ENCODE measurements at regions of chr1 and their contacts with region 1.

Region 1: DNA sequence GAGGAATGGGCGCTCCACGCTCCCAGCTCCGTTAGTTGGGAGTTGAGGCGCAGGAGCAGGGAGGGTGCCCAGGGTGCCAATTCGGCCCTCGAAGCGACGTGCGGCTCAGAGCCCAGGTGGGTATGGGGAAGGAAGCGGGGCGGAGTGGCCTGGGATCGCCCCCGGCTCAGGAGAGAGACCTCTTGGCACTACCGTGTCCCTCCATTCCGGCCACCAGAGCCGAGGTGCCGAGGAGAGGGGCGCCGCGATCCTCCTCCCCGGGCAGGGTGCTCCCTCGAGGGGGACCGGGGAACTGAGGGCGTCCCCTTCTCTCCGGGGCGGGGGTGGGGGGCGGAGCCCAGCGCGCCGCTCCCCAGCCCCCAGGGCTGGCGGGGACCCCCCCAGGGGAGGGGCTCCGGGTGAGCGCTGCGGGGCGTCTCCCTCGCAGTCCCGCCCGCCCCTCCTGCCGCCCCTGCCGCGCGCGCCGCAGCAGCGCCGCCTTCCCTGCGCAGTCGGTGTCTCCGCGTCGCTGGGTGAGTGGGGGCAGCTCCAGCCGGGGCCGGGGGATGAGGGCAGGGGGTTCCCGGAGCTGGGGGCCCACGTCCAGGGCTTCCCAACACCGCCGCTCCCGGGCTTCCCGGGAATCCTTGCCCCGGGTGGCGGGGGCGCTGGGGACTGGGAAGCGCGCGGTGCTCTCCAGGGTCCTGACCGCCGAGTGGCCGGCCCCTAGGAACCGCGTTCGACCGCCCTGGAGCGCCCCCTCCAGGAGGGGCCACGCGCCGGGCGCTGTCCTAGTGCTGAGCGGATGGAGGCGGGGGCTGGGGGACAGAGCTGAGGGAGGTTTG is at the start of gene HPCA:
- DNase-seq: peak; percentile 76
- H3K4me3 ChIP-seq: peak within 1 kb of the TSS in 1 of 2 experiments; percentile 25; a peak in 3 of 4 replicates
- H3K27ac ChIP-seq: no peak within 1 kb of the TSS
- H3K4me1 ChIP-seq: peaks cover 0 to 8% of the 10 kb centered on the region in 2 experiments; a peak in 2 of 4 replicates
- H3K27me3 ChIP-seq: peaks cover 5% of the 10 kb centered on the region; the same call in 1 of the 2 replicates
- CTCF ChIP-seq: peak; percentile 75
- EP300 ChIP-seq: no peak
- RAD21 ChIP-seq: no peak
- polyA plus RNA-seq, gene HPCA: not detected in 2 replicates

Region 2: DNA sequence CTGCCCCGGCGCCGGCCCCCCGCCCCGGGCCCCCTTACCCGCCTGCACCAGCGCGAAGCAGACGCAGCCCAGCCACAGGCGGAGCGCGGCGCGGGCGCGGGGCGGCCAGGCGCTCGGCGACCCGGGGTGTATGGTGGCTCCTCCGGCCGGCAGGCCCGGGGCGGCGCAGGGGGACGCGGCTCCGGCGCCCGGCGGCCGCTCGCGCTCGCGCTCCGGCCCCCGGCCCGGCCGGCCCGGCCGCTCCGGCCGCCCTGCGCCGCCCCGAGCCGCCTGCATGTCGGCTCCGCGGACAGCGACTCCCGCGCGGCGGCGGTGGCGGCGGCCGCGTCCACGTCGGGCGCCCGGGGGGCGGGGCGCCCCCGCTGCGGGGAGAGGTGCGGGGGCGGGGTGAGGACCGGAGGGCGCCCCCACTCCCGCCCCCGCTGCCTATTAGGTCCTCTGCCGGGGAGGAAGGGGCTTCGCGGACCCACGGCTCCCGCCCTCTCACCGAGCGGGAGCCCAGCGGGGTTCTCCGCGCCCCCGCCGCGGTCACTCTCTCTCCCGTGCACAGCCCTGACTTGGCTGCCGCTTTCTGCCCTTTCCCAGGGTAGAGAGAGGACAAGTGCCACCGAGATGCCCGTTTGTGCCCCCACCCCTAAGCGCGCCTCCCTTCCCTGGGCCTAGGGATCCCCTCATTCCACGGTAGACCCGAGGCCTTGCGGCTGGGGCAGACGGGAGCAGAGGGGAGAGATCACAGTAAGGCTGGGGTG is 15.4 kb before region 1 on chr1 and contains the start of gene FNDC5:
- CTCF ChIA-PET with region 1: interaction called, 46 read pairs
- POLR2A ChIA-PET with region 1: no interaction called
- DNase-seq: peak; percentile 89
- H3K4me3 ChIP-seq: peak within 1 kb of the TSS in 1 of 2 experiments; percentile 46; a peak in 3 of 4 replicates
- H3K27ac ChIP-seq: no peak within 1 kb of the TSS
- H3K4me1 ChIP-seq: peaks cover 0 to 13% of the 10 kb centered on the region in 2 experiments; a peak in 1 of 4 replicates
- H3K27me3 ChIP-seq: no peaks in the 10 kb centered on the region
- CTCF ChIP-seq: no peak
- EP300 ChIP-seq: no peak
- RAD21 ChIP-seq: no peak
- polyA plus RNA-seq, gene FNDC5: 0.59 and 0.94 TPM in 2 replicates

Region 3: DNA sequence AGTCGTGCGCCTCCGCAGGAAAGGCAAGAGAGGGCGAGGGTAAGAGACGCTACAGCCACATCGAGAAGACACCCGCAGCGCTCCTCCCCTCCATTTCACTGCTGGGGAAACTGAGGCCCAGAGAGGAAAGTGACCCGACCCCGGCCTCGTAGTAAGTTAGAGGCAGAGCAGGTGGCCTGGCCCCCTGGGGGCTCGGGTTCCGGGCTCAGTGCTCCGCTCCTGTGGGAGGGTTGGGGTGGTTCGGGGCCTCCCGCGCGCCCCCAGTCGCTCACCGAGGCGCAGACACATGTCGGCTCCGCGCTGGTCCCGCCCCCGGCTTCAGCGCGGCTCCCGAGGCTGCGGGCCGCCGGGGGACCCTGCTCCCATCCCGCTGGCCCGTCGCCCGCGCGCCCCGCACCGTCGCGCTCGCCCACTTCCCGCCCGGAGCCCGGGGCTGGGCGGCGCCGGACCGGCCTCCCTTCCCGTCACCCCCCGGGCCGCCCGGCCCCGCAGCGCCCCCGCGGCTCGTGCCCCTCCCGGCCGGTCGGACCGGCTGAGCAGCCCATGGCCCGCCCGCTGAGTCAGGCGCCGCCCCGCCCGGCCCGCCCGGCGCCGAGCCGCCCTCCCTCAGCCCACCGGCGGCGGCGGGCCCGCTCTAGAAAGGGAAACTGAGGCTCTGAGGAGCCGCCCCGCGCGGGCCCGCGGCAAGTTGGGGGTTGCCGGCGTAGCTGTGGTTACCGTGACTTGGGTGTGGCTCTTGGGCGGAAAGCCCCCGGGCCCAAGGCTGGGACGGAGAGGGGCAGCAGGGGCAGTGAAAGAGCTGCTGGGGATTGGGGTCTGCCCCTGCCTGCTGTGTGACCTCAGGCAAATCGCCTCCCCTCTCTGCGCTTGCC is 15.0 kb after region 1 on chr1 and contains the start of gene TMEM54:
- CTCF ChIA-PET with region 1: interaction called, 19 read pairs
- POLR2A ChIA-PET with region 1: no interaction called
- DNase-seq: peak; percentile 83
- H3K4me3 ChIP-seq: peak within 1 kb of the TSS; percentile 58 to 77
- H3K27ac ChIP-seq: no peak within 1 kb of the TSS
- H3K4me1 ChIP-seq: peaks cover 0 to 11% of the 10 kb centered on the region in 2 experiments; a peak in 1 of 4 replicates
- H3K27me3 ChIP-seq: peaks cover 7% of the 10 kb centered on the region; the same call in 1 of the 2 replicates
- CTCF ChIP-seq: peak; percentile 6; the same call in 1 of the 2 replicates
- EP300 ChIP-seq: no peak
- RAD21 ChIP-seq: no peak
- polyA plus RNA-seq, gene TMEM54: 54.5 and 66.6 TPM in 2 replicates